ENCODE measurements at regions of chr1 and their contacts with region 1.

Region 1: DNA sequence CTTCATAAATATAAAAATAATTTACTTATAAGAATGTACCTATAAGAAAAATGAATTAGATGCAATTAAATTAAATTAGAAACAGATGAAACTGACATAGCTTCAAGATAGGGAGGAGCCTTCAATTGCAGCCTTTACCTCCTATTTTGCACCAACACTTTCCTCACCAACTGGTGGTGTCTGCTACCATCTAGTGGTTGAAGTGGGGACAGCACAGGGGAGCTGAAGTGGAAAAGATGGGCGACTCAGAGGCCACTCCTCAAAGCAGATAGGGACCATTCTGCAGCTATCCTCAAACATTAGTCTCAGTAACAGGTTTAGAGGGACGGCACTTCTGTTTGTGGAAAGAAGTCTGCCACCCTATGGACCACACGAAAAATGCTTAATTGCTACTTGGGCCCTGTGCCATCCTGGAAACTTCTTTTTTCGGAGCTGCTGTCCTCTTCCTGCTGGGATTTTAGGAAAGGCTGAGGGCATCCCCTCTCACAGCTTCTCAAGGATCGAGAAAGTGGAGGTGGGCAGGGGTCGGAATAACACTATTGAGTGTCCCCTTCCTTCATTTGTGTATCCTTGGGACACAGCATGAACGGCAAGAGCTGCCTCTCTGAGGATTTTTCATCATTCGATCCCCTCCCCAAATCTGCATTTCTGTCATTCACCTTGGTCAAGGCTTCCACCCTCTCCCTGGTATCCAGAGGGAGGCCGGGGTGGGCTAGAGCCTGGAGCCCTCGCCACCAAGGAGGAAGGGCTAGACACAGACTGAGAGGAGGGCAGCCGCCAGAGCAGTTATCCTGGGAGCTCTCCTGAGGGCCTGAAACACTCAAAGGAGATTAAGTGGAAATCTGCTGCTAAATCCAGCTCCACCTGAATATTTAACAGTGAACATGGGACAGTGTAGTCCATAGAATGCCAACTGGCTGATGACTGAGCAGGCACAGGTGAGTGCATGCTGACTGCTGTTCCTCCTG is 9.6 kb downstream of the PROK1 start:
- DNase-seq: peak; percentile 94
- ATAC-seq: peak; percentile 48
- H3K4me3 ChIP-seq: no peak overlapping the region
- H3K27ac ChIP-seq: no peak overlapping the region
- H3K4me1 ChIP-seq: peaks cover 26% of the 10 kb centered on the region
- H3K27me3 ChIP-seq: no peaks in the 10 kb centered on the region
- CTCF ChIP-seq: peak; percentile 94

Region 2: DNA sequence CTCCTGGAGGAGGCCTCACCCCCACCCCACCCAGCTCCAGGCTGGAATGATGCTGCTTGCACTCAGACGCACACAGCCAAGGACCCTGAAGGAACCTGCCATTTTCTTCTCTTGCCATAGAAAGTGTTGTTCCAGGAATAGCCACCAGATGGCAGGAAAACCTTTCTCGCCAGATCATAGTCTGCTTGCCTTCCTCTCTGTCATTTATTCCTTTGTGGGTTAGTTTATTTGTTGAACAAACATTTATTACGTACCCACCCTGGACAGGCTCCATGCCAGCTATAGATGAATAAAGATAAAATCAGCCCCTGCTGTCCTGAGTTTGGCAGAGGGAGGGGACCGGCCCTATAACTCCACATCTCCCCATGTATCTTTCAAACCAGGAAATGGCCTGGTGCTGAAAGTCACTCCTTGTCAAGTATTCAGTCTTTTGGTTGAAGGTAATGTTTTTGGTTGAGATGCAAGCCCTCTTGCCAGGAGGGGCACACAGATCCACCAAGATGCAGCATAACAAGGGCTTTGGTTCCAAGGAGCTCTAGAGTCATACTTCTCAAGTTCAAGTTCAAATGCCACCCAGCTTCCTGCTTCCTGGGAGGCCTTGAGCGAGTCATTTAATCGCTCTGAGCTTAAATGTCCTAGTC is 257.4 kb before region 1 on chr1:
- CTCF ChIA-PET with region 1: interaction called, 14 read pairs
- POLR2A ChIA-PET with region 1: no interaction called
- intact Hi-C with region 1: loop called (anchors 1 kb)
- DNase-seq: peak; percentile 94
- ATAC-seq: peak; percentile 72
- H3K4me3 ChIP-seq: no peak overlapping the region
- H3K27ac ChIP-seq: peak overlapping the region; percentile 51
- H3K4me1 ChIP-seq: peaks cover 10% of the 10 kb centered on the region
- H3K27me3 ChIP-seq: no peaks in the 10 kb centered on the region
- CTCF ChIP-seq: peak; percentile 92

Region 3: DNA sequence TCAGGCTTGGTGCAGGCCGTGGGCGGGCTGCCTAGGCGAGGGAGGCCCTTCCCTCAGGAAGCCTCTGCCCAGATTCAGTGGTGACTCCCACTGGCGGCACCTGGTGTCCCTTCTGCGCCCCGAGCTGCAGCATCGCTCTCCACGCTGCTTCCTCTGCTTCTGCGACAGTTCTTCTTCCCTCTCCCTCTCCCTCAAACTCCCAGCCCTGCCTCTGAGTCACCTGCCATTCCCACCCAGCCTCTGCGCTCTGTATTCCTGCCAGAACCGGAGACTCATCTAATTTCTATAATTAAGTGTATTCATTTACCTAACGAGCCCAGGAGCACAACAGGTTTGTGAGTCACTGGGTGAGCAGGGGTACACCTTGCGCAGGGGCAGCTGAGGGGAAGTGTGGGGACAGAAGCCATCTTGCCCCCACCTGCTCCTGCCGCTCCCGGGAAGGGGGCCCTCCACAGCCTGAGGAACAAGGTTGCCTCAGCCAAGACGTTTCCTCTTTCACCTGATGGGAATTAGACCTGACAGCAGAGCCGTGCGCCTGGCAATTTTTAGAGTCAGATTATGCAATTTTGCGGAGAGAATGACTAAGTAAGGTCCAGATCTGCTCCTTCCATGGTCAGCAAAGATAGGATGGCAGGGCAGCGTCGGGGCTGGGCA is 231.1 kb before region 1 on chr1:
- CTCF ChIA-PET with region 1: no interaction called
- POLR2A ChIA-PET with region 1: no interaction called
- intact Hi-C with region 1: no loop called
- DNase-seq: no peak
- ATAC-seq: no peak
- H3K4me3 ChIP-seq: no peak overlapping the region
- H3K27ac ChIP-seq: no peak overlapping the region
- H3K4me1 ChIP-seq: peaks cover 7% of the 10 kb centered on the region
- H3K27me3 ChIP-seq: no peaks in the 10 kb centered on the region
- CTCF ChIP-seq: no peak

Region 4: GRCh38 chr1:110312188-110313121 is 148.1 kb before region 1 on chr1:
- CTCF ChIA-PET with region 1: interaction called, 3 read pairs
- POLR2A ChIA-PET with region 1: no interaction called
- intact Hi-C with region 1: loop called (anchors 5 kb)
- DNase-seq: peak; percentile 81
- ATAC-seq: peak; percentile 98
- H3K4me3 ChIP-seq: no peak overlapping the region
- H3K27ac ChIP-seq: no peak overlapping the region
- H3K4me1 ChIP-seq: no peaks in the 10 kb centered on the region
- H3K27me3 ChIP-seq: no peaks in the 10 kb centered on the region
- CTCF ChIP-seq: peak; percentile 95

Region 5: GRCh38 chr1:110412576-110412975 is 48.0 kb before region 1 on chr1:
- CTCF ChIA-PET with region 1: interaction called, 11 read pairs
- POLR2A ChIA-PET with region 1: no interaction called
- intact Hi-C with region 1: loop called (anchors 1 kb)
- DNase-seq: peak; percentile 78
- ATAC-seq: peak; percentile 83
- H3K4me3 ChIP-seq: no peak overlapping the region
- H3K27ac ChIP-seq: no peak overlapping the region
- H3K4me1 ChIP-seq: peaks cover 8% of the 10 kb centered on the region; the same call in 1 of the 2 replicates
- H3K27me3 ChIP-seq: no peaks in the 10 kb centered on the region
- CTCF ChIP-seq: peak; percentile 90

Measured in PC-3 (cell line).